ENCODE measurements at regions of chr2 and their contacts with region 1.

Region 1: DNA sequence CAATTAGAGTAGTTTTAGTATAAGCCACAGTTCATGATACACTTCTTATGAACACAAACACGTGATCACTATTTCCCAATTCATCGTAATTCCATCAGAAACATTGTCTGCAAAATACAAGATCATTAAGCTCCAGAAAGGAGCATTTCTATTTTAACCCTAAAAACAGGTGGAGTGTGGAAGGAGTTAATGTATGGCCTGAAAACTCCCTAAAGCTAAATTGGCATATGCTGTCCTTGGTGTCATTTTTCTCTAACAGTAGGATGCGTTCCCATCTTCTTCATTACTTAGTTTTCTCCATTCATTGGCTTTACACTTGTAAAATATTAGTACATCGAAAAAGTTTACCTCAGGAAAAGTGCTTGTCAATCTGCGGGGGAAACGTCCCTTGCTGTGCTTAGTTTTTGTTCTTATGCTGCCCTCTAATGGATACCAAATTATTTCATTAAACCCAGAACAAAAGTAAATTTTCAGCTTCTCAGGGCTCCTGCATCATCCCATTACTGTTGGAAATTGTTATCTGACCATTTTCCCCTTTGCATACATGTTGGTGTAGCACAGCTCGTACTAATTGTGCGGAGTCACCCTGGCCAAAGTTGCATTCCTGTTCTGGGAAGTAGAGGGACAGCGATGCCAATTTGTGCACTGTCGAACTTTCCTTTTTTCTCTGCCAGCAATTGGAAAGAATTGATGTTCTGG is 153.4 kb downstream of the GPD2 start:
- DNase-seq: no peak
- H3K4me3 ChIP-seq: peak overlapping the region in 24 of 59 donors; percentile 2 to 42 (median 24)
- H3K27ac ChIP-seq: peak overlapping the region in 15 of 59 donors; percentile 1 to 63 (median 34)
- H3K27me3 ChIP-seq: no peaks in the 10 kb centered on the region
- CTCF ChIP-seq: peak in 55 of 56 donors; percentile 36 to 84 (median 70)

Region 2: DNA sequence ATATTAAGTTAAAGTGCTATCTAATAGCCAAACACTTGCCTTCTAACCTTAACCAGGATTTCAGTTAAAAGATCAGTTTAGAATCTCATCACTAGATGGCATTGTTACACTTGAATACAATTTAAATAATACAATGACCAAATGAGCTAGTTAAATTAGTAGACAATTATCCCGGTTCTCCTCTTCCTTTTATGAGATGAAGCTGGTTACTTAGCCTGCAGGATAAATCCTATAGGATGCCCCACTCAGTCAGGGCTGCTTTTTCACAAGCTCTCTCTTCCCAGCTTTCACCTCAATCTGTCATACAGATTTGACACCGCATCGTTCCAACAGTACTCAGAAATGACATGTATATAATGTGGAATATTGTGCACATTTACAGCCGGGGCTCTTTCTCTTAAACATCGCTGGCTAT is 1212.3 kb before region 1 on chr2:
- intact Hi-C with region 1: loop called (anchors 5 to 10 kb)
- DNase-seq: no peak
- H3K4me3 ChIP-seq: no peak overlapping the region
- H3K27ac ChIP-seq: no peak overlapping the region
- H3K27me3 ChIP-seq: no peaks in the 10 kb centered on the region
- CTCF ChIP-seq: peak; percentile 26 to 84 (median 63)

Region 3: GRCh38 chr2:155382776-155383175 is 1206.8 kb before region 1 on chr2:
- intact Hi-C with region 1: loop called (anchors 5 to 10 kb)
- DNase-seq: peak in 1 of 10 donors; percentile 35
- H3K4me3 ChIP-seq: no peak overlapping the region
- H3K27ac ChIP-seq: no peak overlapping the region
- H3K27me3 ChIP-seq: no peaks in the 10 kb centered on the region
- CTCF ChIP-seq: no peak

Region 4: DNA sequence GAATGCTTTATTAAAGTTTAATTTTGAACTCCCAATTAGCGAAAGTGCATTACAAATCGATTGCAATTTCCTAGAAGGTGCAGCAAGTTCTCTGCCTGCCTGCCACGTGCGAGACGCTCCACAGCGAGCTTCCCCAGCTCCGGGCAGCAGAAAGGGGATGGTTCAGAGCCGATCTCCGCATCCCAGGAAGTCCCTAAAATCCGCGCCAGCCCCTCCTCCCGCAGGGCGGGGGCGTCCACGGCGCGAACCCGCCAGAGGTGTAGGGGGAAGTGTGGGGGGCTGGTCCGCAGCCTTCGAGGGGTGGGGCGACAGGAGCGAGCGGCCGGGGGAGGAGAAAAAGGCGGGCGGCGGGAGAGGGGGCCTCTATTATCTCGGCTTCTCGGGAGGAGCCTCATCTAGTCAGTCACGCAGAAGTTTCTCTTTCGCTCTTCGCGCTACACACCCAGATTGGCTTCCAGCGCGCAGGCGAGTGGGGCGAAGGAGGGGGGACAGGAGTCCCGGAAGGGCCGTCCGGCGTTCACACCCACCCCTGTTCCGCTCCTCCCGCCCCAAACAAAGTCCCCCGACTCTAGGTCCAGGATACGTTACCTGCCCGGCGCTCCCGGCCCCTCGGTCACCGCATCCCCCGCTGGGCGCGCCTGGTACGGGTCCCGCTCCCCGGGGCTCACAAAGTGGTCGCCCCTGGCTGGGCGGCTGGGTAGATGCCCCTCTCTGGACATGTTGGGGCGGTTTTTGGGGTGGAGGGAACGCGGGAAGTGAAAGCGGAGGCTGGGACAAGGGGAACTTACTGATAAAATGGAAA is 247.9 kb before region 1 on chr2:
- intact Hi-C with region 1: loop called (anchors 2 kb)
- DNase-seq: peak; percentile 61 to 87 (median 82)
- H3K4me3 ChIP-seq: peak overlapping the region; percentile 69 to 97 (median 87)
- H3K27ac ChIP-seq: peak overlapping the region; percentile 94 to 100 (median 100)
- H3K27me3 ChIP-seq: no peaks in the 10 kb centered on the region
- CTCF ChIP-seq: peak in 6 of 56 donors; percentile 1 to 14 (median 8)

Region 5: GRCh38 chr2:156400706-156401678 is 188.5 kb before region 1 on chr2:
- intact Hi-C with region 1: loop called in 1 of 2 experiments (anchors 10 kb)
- DNase-seq: peak; percentile 62 to 81 (median 68)
- H3K4me3 ChIP-seq: peak overlapping the region; percentile 56 to 98 (median 76)
- H3K27ac ChIP-seq: peak overlapping the region; percentile 81 to 100 (median 98)
- H3K27me3 ChIP-seq: no peaks in the 10 kb centered on the region
- CTCF ChIP-seq: peak in 5 of 56 donors; percentile 5 to 15 (median 8)

Region 6: GRCh38 chr2:156435715-156436496 is 153.6 kb before region 1 on chr2 and contains the start of gene GPD2:
- intact Hi-C with region 1: loop called in 1 of 2 experiments (anchors 5 kb)
- DNase-seq: peak; percentile 68 to 90 (median 84)
- H3K4me3 ChIP-seq: peak within 1 kb of the TSS; percentile 58 to 99 (median 84)
- H3K27ac ChIP-seq: peak within 1 kb of the TSS; percentile 87 to 99 (median 97)
- H3K27me3 ChIP-seq: no peaks in the 10 kb centered on the region
- CTCF ChIP-seq: peak in 33 of 56 donors; percentile 2 to 55 (median 27)
- total RNA-seq, gene GPD2: 31.2 to 87.8 (median 46.5) TPM

Measured in dorsolateral prefrontal cortex (tissue), 120 donors.